ENCODE measurements at regions of chr12 and their contacts with region 1.

Region 1: GRCh38 chr12:121499929-121500793 is 80.7 kb downstream of the KDM2B start:
- DNase-seq: peak; percentile 69 to 98 (median 86)

Region 2: GRCh38 chr12:121202407-121203370 is 297.5 kb before region 1 on chr12:
- intact Hi-C with region 1: no loop called
- DNase-seq: no peak

Region 3: DNA sequence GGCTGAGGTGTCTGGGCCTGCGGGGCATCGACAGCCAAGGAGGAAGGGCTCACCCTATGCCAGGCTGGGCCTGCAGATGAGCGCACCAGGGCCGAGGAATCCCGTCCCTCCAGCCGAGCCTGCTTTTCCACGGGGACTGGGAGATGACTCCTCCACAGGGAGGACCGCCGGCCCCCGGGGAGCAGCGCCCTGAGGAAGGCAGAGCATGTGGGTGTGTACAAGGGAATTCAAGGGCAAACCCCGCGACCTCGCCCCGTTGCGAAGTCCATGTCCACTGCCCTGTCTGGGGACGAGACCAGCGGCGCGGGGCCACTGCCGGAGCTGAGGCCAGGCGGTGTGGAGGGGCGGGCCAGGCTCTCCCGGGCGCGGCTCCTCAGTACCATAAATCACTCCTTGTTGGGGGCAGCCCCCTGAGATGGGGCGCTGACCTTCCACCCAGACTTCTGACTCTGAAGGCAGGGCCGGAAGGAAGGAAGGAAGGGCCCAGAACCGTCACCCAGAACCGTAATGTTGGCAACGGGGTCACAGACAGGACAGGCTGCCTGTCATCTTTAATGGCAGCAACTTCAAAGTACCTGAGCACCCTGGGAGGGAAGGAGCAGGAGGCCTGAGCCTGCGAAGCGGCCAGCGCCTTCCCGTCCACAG is 47.7 kb before region 1 on chr12:
- intact Hi-C with region 1: no loop called
- DNase-seq: peak in 1 of 10 donors; percentile 78

Region 4: DNA sequence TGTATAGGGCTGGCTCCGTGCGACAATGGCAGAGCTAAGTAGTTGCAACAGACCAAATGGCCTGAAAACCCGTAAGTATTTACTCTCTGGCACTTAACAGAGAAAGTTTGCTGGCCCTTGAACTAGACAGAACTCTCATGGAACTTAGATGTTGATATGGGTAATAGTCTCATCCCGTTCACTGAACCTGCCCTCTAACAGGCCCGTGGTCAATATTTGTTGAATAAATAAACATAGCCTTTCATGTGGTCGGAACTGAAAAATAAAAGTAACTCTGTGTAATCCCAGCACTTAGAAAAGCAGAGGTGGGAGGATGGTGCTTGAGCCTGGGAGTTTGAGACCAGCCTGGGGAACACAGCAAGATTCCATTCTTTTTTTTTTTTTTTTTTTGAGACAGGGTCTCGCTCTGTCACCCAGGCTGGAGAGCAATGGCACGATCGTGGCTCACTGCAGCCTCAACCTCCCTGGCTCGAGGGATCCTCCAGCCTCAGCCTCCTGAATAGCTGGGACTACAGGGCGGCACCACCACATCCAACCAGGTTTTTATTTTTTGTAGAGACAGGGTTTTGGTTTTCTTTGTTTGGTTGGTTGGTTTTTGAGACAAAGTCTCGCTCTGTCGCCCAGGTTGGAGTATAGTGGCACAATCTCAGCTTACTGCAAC is 50.9 kb after region 1 on chr12:
- intact Hi-C with region 1: no loop called
- DNase-seq: no peak

Region 5: DNA sequence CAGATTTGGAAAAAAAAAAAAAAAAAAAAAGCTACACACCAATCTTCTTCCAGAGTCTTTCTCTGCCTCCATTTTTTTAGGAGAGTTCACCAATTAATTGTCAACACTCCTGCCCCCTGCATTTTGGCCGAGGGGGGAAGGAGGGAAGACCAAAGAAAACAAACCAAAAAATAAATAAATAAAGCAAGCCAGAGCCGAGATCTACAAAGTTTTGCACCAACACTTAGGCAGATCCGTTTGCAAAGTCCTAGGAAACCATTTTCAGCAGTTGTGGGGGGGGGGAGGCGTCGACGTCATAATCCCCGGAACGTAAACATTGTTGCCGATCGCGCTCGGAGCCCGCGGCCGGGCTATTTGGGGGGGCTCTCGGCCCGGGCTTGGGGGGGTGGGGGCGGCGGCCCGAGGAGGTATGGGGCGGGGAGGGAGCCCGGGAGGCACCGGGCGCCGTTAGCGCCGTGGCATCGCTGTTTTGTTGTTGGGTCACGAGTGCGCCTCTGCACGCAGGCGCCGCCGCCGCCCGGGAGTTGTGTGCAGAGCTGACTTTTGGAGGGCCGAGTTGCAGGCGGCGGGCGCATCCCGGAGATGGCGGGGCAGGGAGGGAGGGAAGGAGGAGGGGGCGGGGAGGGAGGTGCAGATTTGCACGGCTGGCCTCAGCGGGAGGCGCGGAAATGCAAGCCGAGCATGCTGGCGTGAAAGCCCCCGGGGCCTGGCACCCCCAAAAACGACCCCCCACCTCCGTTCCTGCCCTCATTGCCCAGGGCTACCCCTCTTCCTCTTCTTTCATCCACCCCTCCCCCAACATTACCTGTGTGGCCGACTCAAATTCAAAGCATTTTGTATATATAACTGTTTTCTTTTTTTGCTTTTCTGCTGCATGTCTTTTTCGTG is 80.1 kb after region 1 on chr12:
- intact Hi-C with region 1: loop called (anchors 10 kb)
- DNase-seq: peak; percentile 61 to 96 (median 76)

Region 6: GRCh38 chr12:121678716-121679580 is 178.8 kb after region 1 on chr12:
- intact Hi-C with region 1: loop called (anchors 5 kb)
- DNase-seq: no peak

Measured in posterior cingulate gyrus (tissue), 11 donors.